ENCODE measurements at regions of chr3 and their contacts with region 1.

Region 1: DNA sequence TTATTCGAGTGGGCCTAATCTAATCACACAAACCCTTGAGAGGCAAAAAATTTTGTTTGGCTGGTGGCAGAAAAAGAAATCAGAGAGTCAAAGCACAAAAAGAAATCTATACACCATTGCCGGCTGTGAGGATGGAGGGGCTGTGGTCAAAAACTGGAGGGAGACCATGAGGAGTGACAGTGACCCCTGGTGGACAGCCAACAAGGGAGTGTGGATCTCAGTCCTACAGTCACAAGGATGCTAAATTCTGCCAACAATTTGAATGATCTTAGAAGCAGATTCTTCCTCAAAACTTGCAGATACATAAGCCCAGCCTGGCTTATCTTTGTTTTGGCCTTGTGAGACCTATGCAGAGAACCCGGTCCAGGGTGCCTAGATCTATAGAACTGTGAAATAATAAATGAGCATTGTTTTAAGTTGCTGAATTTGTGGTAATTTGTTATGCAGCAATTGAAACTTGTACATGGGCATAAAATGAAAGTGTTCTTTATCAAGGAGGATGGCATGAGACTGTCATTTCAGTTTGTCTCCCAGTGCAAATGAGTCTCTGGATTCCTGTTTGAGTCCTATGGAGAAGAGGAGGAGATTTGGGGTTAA is 103.0 kb upstream of the ARHGEF26 start:
- DNase-seq: peak in 11 of 14 experiments; percentile 1 to 49 (median 6)
- ATAC-seq: no peak
- H3K4me3 ChIP-seq: no peak overlapping the region
- H3K4me3 Mint-ChIP-seq: no peak overlapping the region
- H3K27ac ChIP-seq: no peak overlapping the region
- H3K27ac Mint-ChIP-seq: no peak overlapping the region
- H3K4me1 ChIP-seq: no peaks in the 10 kb centered on the region
- H3K4me1 Mint-ChIP-seq: no peaks in the 10 kb centered on the region
- H3K27me3 ChIP-seq: no peaks in the 10 kb centered on the region
- H3K27me3 Mint-ChIP-seq: no peaks in the 10 kb centered on the region
- CTCF ChIP-seq: peak; percentile 34

Region 2: DNA sequence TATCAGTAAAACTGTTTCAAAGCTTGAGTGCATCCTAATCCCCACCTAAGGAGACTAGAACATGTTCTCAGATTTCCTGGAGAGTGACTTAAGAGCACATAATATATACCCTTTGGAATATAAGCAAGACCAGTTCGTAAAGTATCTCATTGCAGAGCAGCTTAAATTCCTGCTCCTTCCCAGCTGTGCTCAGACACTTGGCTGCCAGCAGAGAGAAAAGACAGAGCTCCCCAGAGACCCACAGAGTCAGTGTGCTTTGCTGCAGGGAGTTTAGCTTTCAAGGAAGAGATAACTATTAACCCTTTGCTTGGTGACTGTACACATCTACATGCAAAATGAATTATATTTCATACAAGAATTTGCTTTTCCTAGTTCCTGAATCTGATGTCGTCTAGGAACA is 235.1 kb before region 1 on chr3:
- CTCF ChIA-PET with region 1: no interaction called
- POLR2A ChIA-PET with region 1: no interaction called
- intact Hi-C with region 1: loop called in 1 of 2 experiments (anchors 10 kb)
- DNase-seq: no peak
- ATAC-seq: no peak
- H3K4me3 ChIP-seq: no peak overlapping the region
- H3K4me3 Mint-ChIP-seq: no peak overlapping the region
- H3K27ac ChIP-seq: no peak overlapping the region
- H3K27ac Mint-ChIP-seq: no peak overlapping the region
- H3K4me1 ChIP-seq: no peaks in the 10 kb centered on the region
- H3K4me1 Mint-ChIP-seq: no peaks in the 10 kb centered on the region
- H3K27me3 ChIP-seq: peaks cover 0 to 5% of the 10 kb centered on the region in 2 experiments
- H3K27me3 Mint-ChIP-seq: peaks cover 11% of the 10 kb centered on the region
- CTCF ChIP-seq: no peak

Region 3: GRCh38 chr3:153835540-153835939 is 182.7 kb before region 1 on chr3:
- CTCF ChIA-PET with region 1: no interaction called
- POLR2A ChIA-PET with region 1: no interaction called
- intact Hi-C with region 1: no loop called
- DNase-seq: no peak
- ATAC-seq: no peak
- H3K4me3 ChIP-seq: no peak overlapping the region
- H3K4me3 Mint-ChIP-seq: no peak overlapping the region
- H3K27ac ChIP-seq: no peak overlapping the region
- H3K27ac Mint-ChIP-seq: no peak overlapping the region
- H3K4me1 ChIP-seq: no peaks in the 10 kb centered on the region
- H3K4me1 Mint-ChIP-seq: no peaks in the 10 kb centered on the region
- H3K27me3 ChIP-seq: no peaks in the 10 kb centered on the region
- H3K27me3 Mint-ChIP-seq: peaks cover 7% of the 10 kb centered on the region
- CTCF ChIP-seq: no peak

Measured in CD4-positive, alpha-beta T cell (primary cell).